Activated naive CD8-positive, alpha-beta T cell treated with anti-CD3 and anti-CD28 coated beads, Interleukin-2, amount 10 ng/mL, durations not matched to agents 7 days and 5 days (primary cell): ENCODE measurements at regions of chr6 and their contacts with region 1.

Region 1: DNA sequence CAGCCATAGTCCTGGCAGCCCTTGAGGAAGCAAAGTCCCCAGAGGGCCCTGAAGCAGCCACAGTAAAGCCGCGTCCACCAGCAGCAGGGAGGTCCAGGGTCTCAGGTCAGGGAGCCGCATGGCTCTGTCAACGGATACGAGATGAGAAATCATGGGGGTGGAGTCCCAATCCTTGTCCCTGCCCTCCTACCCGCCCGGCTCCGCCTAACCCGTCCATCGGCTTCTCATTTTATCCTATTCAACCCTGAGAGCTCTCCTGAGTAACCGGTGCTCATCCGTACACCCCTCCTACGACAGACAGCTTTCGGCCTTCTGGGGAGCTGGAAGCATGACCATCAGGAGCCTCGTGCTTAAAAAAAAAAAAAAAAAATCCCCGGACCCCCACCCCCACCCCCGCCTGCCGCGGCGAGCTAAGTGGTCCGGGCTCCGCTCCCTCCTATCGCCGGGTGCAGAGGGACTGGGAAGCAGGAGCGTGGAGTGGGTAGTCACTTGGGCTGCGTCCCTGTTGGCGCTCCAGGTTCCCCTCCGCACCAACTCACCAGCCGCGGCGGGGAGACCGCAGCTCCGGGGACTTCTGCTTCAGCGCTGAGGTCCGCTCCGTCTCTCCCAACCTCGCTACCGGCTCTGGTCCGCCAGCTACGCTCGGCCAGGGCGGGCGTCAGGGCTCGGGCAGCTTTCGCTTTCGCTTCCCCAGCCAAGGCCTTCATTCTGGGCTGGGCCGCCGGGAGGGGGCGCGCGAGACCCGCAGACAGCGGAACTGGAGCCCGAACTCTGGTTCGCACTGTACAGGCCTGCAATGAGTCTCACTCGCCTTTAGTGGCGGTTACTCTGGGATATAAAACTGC is at the start of gene TAP2:
- DNase-seq: peak; percentile 100
- ATAC-seq: peak; percentile 79
- H3K4me3 Mint-ChIP-seq: peak within 1 kb of the TSS; percentile 72
- H3K27ac Mint-ChIP-seq: peak within 1 kb of the TSS; percentile 100
- H3K4me1 Mint-ChIP-seq: peaks cover 75% of the 10 kb centered on the region
- H3K27me3 Mint-ChIP-seq: no peaks in the 10 kb centered on the region
- total RNA-seq, gene TAP2: 209 to 210 TPM

Region 2: DNA sequence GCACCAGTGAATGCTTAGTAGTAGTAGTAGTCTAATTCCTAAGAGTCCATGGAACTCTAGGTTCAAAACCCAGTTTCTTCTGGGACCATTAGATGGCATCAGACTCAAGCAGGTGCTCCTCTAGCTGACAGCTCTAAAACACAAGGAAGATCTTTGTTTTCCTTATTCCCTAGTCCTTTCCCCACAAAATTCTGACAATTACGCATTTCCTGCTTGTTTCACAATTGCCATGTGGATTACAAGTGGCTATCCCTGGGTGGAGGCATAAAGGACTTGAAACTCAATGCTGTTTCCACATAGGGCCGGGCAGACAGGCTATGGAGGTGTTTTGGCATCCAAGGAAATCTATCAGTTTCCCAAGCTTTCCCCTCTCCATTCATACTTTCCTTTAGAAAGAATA is 12.4 kb before region 1 on chr6:
- POLR2A ChIA-PET with region 1: interaction called, 14 read pairs
- DNase-seq: no peak
- ATAC-seq: no peak
- H3K4me3 Mint-ChIP-seq: no peak overlapping the region
- H3K27ac Mint-ChIP-seq: no peak overlapping the region
- H3K4me1 Mint-ChIP-seq: peaks cover 19% of the 10 kb centered on the region
- H3K27me3 Mint-ChIP-seq: no peaks in the 10 kb centered on the region

Region 3: GRCh38 chr6:32853541-32854375 is 15.4 kb after region 1 on chr6 and contains the starts of genes PSMB9 and TAP1:
- POLR2A ChIA-PET with region 1: interaction called, 773 read pairs
- DNase-seq: peak; percentile 96
- ATAC-seq: peak; percentile 86
- H3K4me3 Mint-ChIP-seq: peak within 1 kb of the TSS; percentile 98
- H3K27ac Mint-ChIP-seq: peak within 1 kb of the TSS; percentile 100
- H3K4me1 Mint-ChIP-seq: peaks cover 54% of the 10 kb centered on the region
- H3K27me3 Mint-ChIP-seq: no peaks in the 10 kb centered on the region
- total RNA-seq, gene PSMB9: 353 to 356 TPM
- total RNA-seq, gene TAP1: 315 to 323 TPM

Region 4: GRCh38 chr6:32862725-32863124 is 24.4 kb after region 1 on chr6:
- POLR2A ChIA-PET with region 1: interaction called, 773 read pairs
- DNase-seq: no peak
- ATAC-seq: no peak
- H3K4me3 Mint-ChIP-seq: no peak overlapping the region
- H3K27ac Mint-ChIP-seq: no peak overlapping the region
- H3K4me1 Mint-ChIP-seq: peaks cover 52% of the 10 kb centered on the region
- H3K27me3 Mint-ChIP-seq: no peaks in the 10 kb centered on the region

Region 5: DNA sequence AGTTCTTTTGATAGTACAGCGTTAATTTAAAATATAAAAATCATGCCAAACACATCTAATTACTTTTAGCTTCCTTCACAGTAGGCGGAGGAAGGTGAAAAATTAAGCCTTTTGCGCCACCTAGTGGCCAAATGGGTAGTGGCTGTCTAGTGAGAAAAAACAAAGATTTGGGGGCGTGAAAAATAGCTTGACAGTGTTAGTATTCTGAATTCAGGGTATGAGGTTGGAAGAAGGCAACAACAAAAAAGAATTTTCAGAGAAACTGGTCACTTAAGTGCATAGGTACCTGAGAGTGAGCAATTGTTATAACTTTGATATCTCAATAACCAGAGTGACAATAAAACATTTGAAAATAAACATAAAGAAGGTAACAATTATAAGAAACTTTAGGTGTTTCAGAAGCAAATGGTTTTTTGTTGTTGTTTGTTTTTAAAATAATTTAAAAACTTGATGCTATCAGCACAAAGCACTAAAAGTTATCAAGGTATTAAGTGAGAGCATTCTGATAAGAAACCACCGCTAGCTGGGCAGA is 30.0 kb after region 1 on chr6:
- POLR2A ChIA-PET with region 1: interaction called, 136 read pairs
- DNase-seq: peak; percentile 81
- ATAC-seq: peak; percentile 57
- H3K4me3 Mint-ChIP-seq: no peak overlapping the region
- H3K27ac Mint-ChIP-seq: no peak overlapping the region
- H3K4me1 Mint-ChIP-seq: peaks cover 32% of the 10 kb centered on the region
- H3K27me3 Mint-ChIP-seq: peaks cover 4% of the 10 kb centered on the region

Region 6: DNA sequence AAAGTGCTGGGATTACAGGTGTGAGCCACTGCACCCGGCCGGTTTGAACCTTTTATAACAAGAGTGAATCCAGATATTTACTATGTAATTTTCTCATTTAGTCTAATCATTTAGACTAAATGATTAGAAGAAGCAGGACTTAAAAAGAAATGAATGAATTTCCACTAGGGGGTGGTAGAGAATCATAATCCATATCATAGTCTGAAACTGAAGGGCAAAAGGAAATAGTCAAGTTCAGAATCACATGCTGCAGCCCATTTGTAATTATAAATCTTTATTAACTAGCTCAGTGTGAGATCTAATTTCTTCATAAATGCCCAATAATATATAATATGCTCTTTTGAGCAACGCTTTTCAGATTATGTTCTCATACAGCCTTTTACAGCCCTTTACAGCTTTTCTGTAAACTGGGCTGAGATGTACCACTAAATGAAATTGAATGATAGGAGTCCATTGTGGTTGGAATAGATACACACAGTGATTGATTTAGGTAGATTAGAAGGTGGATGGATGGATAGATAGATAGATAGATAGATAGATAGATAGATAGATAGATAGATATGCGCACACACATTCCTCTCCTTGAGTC is 47.5 kb after region 1 on chr6:
- POLR2A ChIA-PET with region 1: no interaction called
- DNase-seq: no peak
- ATAC-seq: no peak
- H3K4me3 Mint-ChIP-seq: no peak overlapping the region
- H3K27ac Mint-ChIP-seq: no peak overlapping the region
- H3K4me1 Mint-ChIP-seq: peaks cover 5% of the 10 kb centered on the region
- H3K27me3 Mint-ChIP-seq: peaks cover 12% of the 10 kb centered on the region

Region 7: DNA sequence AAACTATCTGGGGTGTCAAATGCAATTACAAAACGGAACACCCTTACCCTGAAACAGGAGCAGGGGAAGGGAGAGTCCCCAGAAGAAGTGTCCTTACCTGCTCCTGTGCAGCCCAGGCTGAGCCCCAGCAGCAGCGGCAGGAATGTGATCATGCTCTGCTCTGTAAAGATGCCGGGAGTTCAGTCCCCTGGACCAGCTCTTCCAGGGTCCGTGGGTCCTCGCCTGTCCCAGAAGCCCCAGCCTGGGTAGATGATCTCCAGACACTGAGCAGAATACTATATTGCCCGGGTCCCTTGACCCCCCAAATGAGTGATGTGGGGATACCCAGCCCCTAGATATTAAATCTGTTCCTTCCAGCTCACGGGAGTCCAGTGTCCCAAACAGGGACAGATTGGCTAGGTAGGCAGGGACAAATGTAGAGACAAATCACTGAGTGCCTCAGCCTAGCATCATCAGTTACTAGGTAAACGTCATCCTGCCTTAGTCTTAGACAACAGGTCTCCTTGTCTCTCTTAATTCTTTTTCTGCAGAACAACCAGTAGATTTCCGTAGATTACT is 102.4 kb after region 1 on chr6 and contains the start of gene HLA-DMB:
- POLR2A ChIA-PET with region 1: interaction called, 12 read pairs
- DNase-seq: peak; percentile 52
- ATAC-seq: peak; percentile 72
- H3K4me3 Mint-ChIP-seq: peak within 1 kb of the TSS; percentile 90
- H3K27ac Mint-ChIP-seq: peak within 1 kb of the TSS; percentile 95
- H3K4me1 Mint-ChIP-seq: peaks cover 69% of the 10 kb centered on the region
- H3K27me3 Mint-ChIP-seq: no peaks in the 10 kb centered on the region
- total RNA-seq, gene HLA-DMB: 14.0 to 14.7 TPM

Region 8: DNA sequence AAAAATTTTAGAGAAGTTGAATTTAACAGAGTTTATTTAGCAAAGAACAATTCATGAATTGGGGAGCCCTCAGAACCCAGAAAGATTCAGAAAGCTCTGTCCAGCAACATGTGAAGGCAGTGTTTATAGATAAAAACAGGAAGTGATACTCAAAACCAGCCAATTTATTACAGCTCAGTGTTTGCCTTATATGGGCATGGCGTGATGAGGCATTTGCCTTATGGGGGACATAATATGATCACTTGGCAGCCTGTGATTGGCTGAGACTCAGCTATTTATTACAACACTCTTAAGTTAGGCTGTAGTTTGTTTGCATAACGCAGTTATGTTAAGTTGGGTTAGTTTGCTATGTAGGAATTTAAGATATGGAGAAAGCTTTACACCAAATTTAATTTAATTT is 223.7 kb after region 1 on chr6:
- POLR2A ChIA-PET with region 1: no interaction called
- DNase-seq: no peak
- ATAC-seq: no peak
- H3K4me3 Mint-ChIP-seq: no peak overlapping the region
- H3K27ac Mint-ChIP-seq: no peak overlapping the region
- H3K4me1 Mint-ChIP-seq: no peaks in the 10 kb centered on the region
- H3K27me3 Mint-ChIP-seq: peaks cover 35% of the 10 kb centered on the region